Activated T-helper 2 cell treated with anti-CD3 and anti-CD28 coated beads, Interferon-gamma antibody, Interleukin-2, Interleukin-4, amounts not matched to agents 10 μg/mL and 5 μg/mL and 100 μg/mL, durations not matched to agents 14 hours and 24 hours and 36 hours (primary cell): ENCODE measurements at regions of chr2 and their contacts with region 1.

Region 1: DNA sequence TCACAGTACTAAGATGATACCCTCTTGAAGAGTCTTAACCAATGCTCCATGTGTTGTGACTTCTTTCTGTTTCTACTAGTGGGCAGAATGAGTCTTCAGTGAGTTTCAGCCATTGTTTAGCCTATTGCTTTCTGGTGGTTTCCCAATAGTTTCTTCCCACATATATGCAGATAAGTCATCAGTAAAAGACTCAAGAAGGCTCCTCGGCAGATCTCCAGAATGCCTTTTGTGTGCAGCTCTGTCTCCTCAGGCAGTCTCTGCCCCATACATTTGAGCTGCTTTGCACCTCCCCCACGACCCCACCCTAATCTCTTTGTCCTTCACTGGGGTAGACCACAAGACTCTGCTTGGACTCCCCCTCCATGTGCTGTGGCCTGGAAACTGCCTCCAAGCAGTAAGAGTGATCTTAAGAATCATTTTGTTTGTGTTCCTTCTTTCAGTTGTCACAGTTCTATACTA is 71.6 kb upstream of the CHRNA1 start:
- DNase-seq: no peak
- H3K4me3 Mint-ChIP-seq: peak overlapping the region; percentile 58
- H3K27ac Mint-ChIP-seq: peak overlapping the region; percentile 95
- H3K4me1 Mint-ChIP-seq: peaks cover 31% of the 10 kb centered on the region
- H3K27me3 Mint-ChIP-seq: peaks cover 3% of the 10 kb centered on the region

Region 2: DNA sequence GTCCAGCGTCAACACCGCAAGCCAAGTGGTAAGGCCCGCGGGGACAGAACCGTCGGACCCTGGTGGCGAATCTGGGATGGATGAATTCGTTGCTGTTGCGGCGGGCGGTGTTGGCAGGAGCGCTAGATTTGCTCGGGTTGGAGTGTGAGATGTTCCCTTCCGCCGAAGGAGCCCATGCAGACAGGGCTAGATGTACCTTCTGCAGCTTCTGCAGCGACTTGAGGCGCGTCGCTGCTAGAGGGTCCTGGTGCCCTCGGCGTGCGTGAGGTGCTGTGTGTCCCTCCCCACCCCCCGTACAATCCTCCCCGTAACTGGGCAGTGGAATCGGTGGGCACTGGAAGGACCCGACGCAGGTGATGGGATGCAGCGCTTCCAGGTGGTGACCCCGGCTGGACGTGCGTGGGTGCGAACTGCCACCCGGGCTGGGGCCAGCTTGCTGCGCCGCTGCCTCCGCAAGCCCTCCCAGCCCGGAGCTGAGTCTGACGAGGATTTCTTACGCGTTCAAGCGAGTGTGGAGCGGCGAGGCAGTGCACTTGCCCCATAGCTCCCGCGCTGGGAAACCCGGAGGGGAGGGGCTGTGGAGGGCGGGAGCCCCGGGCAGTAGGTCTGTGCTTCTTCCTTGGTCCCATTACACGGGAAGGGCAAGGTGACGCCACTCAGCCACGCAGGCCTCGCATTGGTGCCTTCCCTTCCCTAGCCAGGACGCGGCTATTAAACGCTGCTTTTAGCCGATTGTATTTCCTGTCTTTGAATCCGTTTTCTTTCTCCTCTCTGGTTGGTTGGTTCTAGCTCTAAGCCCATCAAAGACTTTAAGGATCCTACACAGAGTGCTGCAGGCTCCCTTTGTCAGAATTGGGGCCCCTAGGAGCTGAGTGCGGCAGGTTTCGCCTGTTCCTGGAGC is 105.8 kb before region 1 on chr2:
- intact Hi-C with region 1: no loop called
- DNase-seq: peak; percentile 18
- H3K4me3 Mint-ChIP-seq: peak overlapping the region; percentile 77
- H3K27ac Mint-ChIP-seq: no peak overlapping the region
- H3K4me1 Mint-ChIP-seq: peaks cover 12% of the 10 kb centered on the region
- H3K27me3 Mint-ChIP-seq: peaks cover 54% of the 10 kb centered on the region

Region 3: GRCh38 chr2:174778085-174778981 is 57.5 kb before region 1 on chr2:
- intact Hi-C with region 1: loop called (anchors 1 kb)
- DNase-seq: peak; percentile 76
- H3K4me3 Mint-ChIP-seq: no peak overlapping the region
- H3K27ac Mint-ChIP-seq: peak overlapping the region; percentile 87
- H3K4me1 Mint-ChIP-seq: peaks cover 39% of the 10 kb centered on the region
- H3K27me3 Mint-ChIP-seq: no peaks in the 10 kb centered on the region

Region 4: GRCh38 chr2:174797781-174798276 is 38.0 kb before region 1 on chr2:
- intact Hi-C with region 1: loop called (anchors 1 kb)
- DNase-seq: no peak
- H3K4me3 Mint-ChIP-seq: no peak overlapping the region
- H3K27ac Mint-ChIP-seq: no peak overlapping the region
- H3K4me1 Mint-ChIP-seq: peaks cover 38% of the 10 kb centered on the region
- H3K27me3 Mint-ChIP-seq: no peaks in the 10 kb centered on the region

Region 5: DNA sequence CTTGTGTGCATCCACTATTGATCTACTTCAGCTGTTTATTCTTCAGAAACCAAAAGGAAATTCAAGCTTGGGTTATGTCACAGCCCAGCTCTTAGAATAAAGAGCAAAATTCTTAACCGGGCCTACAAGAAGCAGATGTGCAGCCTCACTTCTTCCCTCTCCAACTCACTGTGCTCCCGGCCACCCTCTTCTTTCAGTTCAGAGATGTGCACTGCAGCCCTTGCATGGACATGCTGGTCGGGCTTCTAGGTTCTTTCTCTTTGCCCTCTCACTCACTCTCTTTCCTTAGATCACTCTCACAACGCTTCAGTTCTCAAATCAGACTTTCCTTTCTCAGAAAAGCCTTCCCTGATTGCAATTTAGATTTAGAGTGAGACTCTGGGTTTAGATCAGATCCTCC is 65.2 kb after region 1 on chr2:
- intact Hi-C with region 1: loop called (anchors 5 kb)
- DNase-seq: no peak
- H3K4me3 Mint-ChIP-seq: peak overlapping the region; percentile 24
- H3K27ac Mint-ChIP-seq: peak overlapping the region; percentile 53
- H3K4me1 Mint-ChIP-seq: peaks cover 20% of the 10 kb centered on the region
- H3K27me3 Mint-ChIP-seq: peaks cover 1% of the 10 kb centered on the region

Region 6: DNA sequence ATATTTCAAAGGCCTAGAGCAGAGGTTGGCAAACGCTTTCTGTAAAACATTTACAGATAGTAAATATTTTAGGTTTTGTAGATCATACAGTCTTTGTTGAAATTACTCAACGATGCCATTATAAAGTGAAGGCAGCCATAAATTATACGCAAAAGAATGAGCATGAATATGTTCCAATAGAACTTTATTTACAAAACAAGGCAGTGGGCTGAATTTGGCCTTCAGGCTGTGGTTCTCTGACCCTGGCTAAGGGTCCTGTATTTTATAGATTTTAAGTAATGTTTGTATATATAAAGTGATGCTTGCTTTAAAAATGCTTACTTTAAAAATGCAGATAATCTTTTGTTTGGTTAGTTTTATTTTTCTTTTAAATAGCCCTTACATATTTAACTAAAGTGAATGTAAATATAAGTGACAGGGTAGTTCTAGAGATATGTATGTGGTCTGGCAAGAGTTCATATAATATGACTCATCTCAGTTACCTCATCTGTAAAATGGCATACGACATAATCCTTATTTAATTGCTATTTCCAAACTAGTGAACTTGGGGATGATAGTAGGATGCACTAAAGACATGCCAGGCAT is 397.4 kb after region 1 on chr2:
- intact Hi-C with region 1: loop called (anchors 5 kb)
- DNase-seq: no peak
- H3K4me3 Mint-ChIP-seq: no peak overlapping the region
- H3K27ac Mint-ChIP-seq: no peak overlapping the region
- H3K4me1 Mint-ChIP-seq: peaks cover 28% of the 10 kb centered on the region
- H3K27me3 Mint-ChIP-seq: no peaks in the 10 kb centered on the region